H1 (cell line): ENCODE measurements at regions of chr20 and their contacts with region 1.

Region 1: DNA sequence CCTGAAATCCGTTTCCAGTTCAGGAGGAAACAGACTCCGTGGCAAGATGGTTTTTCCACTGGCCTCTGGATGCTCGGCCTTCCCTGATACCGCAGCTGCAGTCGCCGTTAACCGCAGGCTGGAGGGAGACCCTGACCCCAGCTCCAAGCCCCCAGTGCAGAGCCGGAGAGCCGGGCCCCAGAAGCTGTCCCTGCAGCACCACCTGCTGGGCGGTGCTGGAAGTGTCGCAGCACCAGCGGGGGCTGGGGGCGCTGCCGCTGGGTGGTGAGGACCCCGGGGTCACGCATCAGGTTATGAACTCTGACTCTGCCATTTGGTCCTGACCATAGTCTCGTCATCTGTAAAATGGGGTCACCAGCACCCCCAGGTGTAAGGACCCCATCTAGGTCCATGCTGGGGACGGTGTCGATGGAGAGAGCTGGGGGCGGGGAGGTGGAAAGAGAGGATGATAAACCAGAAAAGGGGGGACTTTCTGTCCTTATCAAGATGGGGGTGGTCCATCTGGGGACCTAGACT is 20.7 kb upstream of the CHRNA4 start:
- DNase-seq: peak in 1 of 2 experiments; percentile 93
- H3K4me3 ChIP-seq: no peak overlapping the region
- H3K27ac ChIP-seq: no peak overlapping the region
- H3K4me1 ChIP-seq: peaks cover 3 to 20% (median 14%) of the 10 kb centered on the region in 4 experiments
- H3K27me3 ChIP-seq: peaks cover 0 to 2% (median 0%) of the 10 kb centered on the region in 4 experiments; a peak in 1 of 7 replicates
- CTCF ChIP-seq: peak; percentile 94 to 98 (median 96)
- EP300 ChIP-seq: no peak
- POLR2A ChIP-seq: no peak
- RAD21 ChIP-seq: peak; percentile 95 to 97

Region 2: DNA sequence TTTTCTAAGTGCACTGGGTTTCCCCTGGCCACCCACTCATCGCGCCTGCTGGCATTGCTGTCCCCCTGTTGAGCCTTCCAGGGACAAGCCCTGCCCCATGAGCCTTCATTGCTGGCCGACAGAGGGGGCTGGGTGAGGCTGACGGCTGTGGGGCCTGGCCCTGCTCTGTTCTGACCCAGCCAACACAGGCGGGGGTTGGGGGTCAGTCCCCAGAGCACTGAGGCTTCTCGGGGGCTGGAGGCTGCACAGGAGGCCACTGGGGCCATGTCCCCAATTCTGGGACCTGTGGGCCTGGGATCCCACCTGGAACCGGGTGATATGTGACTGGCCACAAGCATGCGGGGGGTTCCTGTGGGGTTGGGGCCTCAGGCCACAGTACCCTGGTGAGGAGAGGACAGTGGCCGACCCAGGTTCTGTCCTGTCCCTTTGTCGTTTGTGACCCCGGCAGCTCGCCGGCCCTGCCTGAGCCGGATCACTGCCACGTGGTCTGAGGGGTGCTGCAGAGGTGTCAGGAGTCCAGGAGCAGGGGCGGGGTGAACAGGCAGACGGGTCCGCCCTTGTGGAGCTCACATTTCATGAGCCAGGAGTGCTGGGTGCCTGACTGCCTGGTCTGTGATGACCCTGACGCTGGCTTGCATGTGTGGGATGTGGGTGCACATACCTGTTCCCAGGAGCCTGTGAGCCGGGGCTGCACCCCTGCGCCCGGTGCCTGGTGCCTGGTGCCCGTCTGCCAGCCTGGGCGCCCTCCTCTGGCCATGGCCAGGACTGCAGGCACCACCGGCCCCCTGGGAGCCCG is 91.0 kb before region 1 on chr20:
- CTCF ChIA-PET with region 1: interaction called, 43 read pairs
- POLR2A ChIA-PET with region 1: interaction called, 3 read pairs
- DNase-seq: peak; percentile 33 to 98
- H3K4me3 ChIP-seq: no peak overlapping the region
- H3K27ac ChIP-seq: no peak overlapping the region
- H3K4me1 ChIP-seq: peaks cover 0 to 24% (median 17%) of the 10 kb centered on the region in 4 experiments; a peak in 6 of 7 replicates
- H3K27me3 ChIP-seq: peaks cover 0 to 9% (median 0%) of the 10 kb centered on the region in 4 experiments; a peak in 2 of 7 replicates
- CTCF ChIP-seq: peak; percentile 86 to 90 (median 86)
- EP300 ChIP-seq: no peak
- POLR2A ChIP-seq: no peak
- RAD21 ChIP-seq: peak; percentile 61 to 72

Region 3: DNA sequence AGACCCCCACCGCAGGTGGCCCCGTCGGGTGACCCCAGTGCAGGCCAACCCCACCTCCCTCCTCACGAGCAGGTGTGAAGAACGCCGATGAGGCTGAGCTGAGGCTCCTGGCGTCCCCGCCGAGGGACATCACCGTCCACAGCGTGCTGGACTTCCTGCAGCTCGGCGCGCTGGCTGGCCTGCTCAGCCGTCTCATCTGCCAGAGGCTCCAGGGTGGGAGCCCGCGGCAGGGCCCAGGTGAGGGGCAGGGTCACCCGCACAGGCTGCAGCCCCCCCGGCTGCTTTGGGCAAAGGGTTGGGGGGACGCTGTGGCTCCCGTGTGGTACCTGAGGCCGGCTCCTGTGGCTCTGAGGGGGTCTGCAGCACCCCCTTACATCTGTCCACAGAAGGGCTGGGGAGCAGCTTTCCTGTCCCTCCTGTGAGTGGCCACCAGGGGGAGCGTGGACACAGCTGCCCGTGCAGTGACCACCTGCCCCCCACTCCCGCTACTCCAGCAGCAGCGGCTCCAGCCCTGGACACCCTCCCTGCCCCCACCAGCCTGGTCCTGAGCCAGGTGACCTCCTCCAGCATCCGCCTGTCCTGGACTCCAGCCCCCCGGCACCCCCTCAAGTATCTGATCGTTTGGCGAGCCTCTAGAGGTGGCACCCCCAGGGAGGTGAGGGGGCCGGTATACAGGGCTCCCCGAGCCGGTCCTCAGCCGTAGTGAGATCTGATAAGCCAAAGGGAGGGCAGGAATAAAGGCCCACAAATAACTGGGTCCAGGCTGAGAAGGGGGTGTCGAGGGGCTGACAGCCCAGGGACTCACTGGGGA is 72.4 kb before region 1 on chr20:
- CTCF ChIA-PET with region 1: interaction called, 230 read pairs
- POLR2A ChIA-PET with region 1: interaction called, 5 read pairs
- DNase-seq: peak in 1 of 2 experiments; percentile 83
- H3K4me3 ChIP-seq: no peak overlapping the region
- H3K27ac ChIP-seq: no peak overlapping the region
- H3K4me1 ChIP-seq: no peaks in the 10 kb centered on the region; a peak in 2 of 7 replicates
- H3K27me3 ChIP-seq: no peaks in the 10 kb centered on the region
- CTCF ChIP-seq: peak; percentile 82 to 93 (median 93)
- EP300 ChIP-seq: no peak
- POLR2A ChIP-seq: no peak
- RAD21 ChIP-seq: peak; percentile 81 to 85

Region 4: DNA sequence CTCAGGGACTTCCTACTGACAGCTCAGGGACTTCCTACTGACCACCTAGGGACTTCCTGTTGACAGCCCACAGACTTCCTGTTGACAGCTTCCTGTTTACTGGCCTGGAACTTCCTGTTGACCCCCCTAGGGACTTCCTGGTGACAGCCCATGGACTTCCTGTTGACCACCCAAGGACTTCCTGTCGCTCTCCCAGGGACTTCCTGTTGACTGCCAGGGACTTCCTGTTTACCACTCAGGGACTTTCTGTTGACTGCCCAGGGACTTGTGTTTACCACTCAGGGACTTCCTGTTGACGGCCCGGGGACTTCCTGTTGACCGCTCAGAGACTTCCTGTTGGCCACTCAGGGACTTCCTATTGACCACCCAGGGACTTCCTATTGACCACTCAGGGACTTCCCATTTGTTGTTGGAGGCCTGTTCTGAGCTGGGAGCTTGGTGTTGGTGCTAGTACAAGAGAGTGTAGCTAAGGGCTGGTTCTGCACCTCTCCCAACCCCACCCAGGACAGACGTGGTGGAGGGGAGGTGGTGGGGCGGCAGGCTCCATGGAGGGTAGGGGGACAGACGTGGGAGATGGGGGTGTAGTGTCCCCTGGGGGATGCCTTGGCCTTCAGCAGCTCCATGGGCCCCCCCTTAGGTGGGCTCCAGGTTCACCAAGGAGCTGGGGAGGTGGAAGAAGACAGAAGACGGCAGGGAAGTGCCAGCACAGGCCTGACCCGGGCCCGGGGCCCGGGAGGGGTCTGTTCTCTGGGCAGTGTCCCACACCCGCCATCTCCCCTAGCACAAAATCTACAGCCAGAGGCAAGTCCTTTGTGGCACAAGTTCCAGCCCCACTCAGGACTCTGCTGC is 54.7 kb before region 1 on chr20:
- CTCF ChIA-PET with region 1: interaction called, 14 read pairs
- POLR2A ChIA-PET with region 1: no interaction called
- DNase-seq: no peak
- H3K4me3 ChIP-seq: no peak overlapping the region
- H3K27ac ChIP-seq: no peak overlapping the region
- H3K4me1 ChIP-seq: peaks cover 0 to 5% (median 1%) of the 10 kb centered on the region in 4 experiments; a peak in 3 of 7 replicates
- H3K27me3 ChIP-seq: no peaks in the 10 kb centered on the region
- CTCF ChIP-seq: no peak
- EP300 ChIP-seq: no peak
- POLR2A ChIP-seq: no peak
- RAD21 ChIP-seq: no peak

Region 5: GRCh38 chr20:63351811-63352591 is 29.9 kb before region 1 on chr20:
- CTCF ChIA-PET with region 1: interaction called, 85 read pairs
- POLR2A ChIA-PET with region 1: interaction called, 3 read pairs
- DNase-seq: peak in 1 of 2 experiments; percentile 82
- H3K4me3 ChIP-seq: no peak overlapping the region
- H3K27ac ChIP-seq: no peak overlapping the region
- H3K4me1 ChIP-seq: peaks cover 0 to 11% (median 8%) of the 10 kb centered on the region in 4 experiments; a peak in 5 of 7 replicates
- H3K27me3 ChIP-seq: no peaks in the 10 kb centered on the region
- CTCF ChIP-seq: peak in 1 of 3 experiments; percentile 3; a peak in 1 of 4 replicates
- EP300 ChIP-seq: peak in 1 of 2 experiments; percentile 77; a peak in 1 of 3 replicates
- POLR2A ChIP-seq: no peak
- RAD21 ChIP-seq: peak in 1 of 2 experiments; percentile 7; a peak in 1 of 4 replicates

Region 6: DNA sequence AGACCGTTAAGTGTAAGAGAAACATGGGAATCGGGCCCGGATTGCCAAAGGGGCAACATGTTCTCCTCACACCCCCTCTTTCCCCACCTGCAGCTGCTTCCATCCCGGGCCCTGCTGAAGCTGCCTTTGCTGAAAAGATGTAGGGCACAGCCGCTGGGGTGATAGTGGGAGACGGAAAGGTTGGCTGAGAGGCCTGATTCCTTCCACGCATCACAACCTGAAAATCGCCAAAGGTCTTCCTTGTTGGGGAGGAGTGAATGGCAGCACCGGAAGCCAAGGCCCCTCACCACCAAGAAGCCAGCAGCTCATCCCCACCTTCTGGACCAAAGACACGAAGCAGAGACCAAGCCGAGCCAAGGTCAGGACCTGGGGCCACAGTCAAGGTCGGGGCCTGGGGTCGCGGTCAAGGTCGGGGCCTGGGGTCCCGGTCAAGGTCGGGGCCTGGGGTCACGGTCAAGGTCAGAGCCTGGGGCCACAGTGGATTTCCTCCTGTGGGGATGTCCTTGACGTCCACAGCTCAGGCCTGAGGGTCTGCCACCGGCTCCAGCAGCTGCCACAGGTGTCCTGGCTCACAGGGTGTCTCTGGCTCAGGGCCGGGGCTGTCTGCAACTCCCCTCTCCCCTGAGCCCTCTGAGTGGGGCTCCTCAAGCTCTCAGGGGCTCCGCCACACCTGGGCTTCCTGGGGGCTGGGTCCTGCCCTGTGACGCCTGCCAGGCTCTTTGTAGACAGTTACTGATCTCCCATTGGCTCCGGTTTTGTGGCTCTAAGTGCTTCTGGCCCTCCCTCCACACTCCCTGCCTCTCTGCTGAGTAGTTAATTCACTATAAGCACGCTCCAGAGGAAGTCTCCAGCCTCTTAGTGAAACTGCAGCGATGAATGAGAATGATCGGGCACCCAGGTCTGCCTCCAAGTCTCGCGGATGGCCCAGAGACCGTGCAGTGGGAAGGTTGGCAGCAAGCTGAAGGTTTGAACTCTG is 15.2 kb before region 1 on chr20:
- CTCF ChIA-PET with region 1: interaction called, 85 read pairs
- POLR2A ChIA-PET with region 1: interaction called, 9 read pairs
- DNase-seq: no peak
- H3K4me3 ChIP-seq: no peak overlapping the region
- H3K27ac ChIP-seq: no peak overlapping the region
- H3K4me1 ChIP-seq: peaks cover 0 to 19% (median 11%) of the 10 kb centered on the region in 4 experiments; a peak in 6 of 7 replicates
- H3K27me3 ChIP-seq: peaks cover 0 to 15% (median 9%) of the 10 kb centered on the region in 4 experiments; a peak in 4 of 7 replicates
- CTCF ChIP-seq: no peak
- EP300 ChIP-seq: no peak
- POLR2A ChIP-seq: no peak
- RAD21 ChIP-seq: no peak

Region 7: GRCh38 chr20:63434599-63435378 is 52.9 kb after region 1 on chr20:
- CTCF ChIA-PET with region 1: no interaction called
- POLR2A ChIA-PET with region 1: no interaction called
- DNase-seq: peak; percentile 80 to 96
- H3K4me3 ChIP-seq: no peak overlapping the region
- H3K27ac ChIP-seq: no peak overlapping the region
- H3K4me1 ChIP-seq: peaks cover 0 to 13% (median 5%) of the 10 kb centered on the region in 4 experiments; a peak in 5 of 7 replicates
- H3K27me3 ChIP-seq: no peaks in the 10 kb centered on the region
- CTCF ChIP-seq: peak; percentile 82 to 99 (median 96)
- EP300 ChIP-seq: no peak
- POLR2A ChIP-seq: no peak
- RAD21 ChIP-seq: peak; percentile 71 to 74

Region 8: GRCh38 chr20:63567386-63568169 is 185.7 kb after region 1 on chr20:
- CTCF ChIA-PET with region 1: no interaction called
- POLR2A ChIA-PET with region 1: no interaction called
- DNase-seq: no peak
- H3K4me3 ChIP-seq: no peak overlapping the region
- H3K27ac ChIP-seq: no peak overlapping the region
- H3K4me1 ChIP-seq: no peaks in the 10 kb centered on the region
- H3K27me3 ChIP-seq: no peaks in the 10 kb centered on the region
- CTCF ChIP-seq: no peak
- EP300 ChIP-seq: no peak
- POLR2A ChIP-seq: no peak
- RAD21 ChIP-seq: no peak